Adrenal gland (tissue), 19 donors: ENCODE measurements at regions of chr19 and their contacts with region 1.

Region 1: DNA sequence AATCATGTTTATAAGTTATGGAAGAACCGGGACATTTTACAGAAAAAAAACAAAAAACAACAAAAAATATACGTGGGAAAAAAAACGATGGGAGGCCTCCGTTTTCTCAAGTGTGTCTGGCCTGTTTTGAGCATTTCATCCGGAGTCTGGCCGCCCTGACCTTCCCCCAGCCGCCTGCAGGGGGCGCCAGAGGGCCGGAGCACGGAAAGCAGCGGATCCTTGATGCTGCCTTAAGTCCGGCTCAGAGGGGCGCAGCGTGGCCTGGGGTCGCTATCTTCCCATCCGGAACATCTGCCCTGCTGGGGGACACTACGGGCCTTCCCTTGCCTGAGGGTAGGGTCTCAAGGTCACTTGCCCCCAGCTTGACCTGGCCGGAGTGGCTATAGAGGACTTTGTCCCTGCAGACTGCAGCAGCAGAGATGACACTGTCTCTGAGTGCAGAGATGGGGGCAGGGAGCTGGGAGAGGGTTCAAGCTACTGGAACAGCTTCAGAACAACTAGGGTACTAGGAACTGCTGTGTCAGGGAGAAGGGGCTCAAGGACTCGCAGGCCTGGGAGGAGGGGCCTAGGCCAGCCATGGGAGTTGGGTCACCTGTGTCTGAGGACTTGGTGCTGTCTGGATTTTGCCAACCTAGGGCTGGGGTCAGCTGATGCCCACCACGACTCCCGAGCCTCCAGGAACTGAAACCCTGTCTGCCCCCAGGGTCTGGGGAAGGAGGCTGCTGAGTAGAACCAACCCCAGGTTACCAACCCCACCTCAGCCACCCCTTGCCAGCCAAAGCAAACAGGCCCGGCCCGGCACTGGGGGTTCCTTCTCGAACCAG is 1.8 kb upstream of the APOE start:
- DNase-seq: peak; percentile 69 to 89 (median 80)
- H3K4me3 ChIP-seq: no peak overlapping the region
- H3K27ac ChIP-seq: peak overlapping the region; percentile 7 to 84 (median 82)
- H3K4me1 ChIP-seq: peaks cover 16 to 31% of the 10 kb centered on the region in 2 donors
- H3K27me3 ChIP-seq: no peaks in the 10 kb centered on the region
- CTCF ChIP-seq: peak; percentile 98 to 99 (median 98)
- POLR2A ChIP-seq: no peak

Region 2: GRCh38 chr19:44924243-44924725 is 20.5 kb after region 1 on chr19:
- intact Hi-C with region 1: no loop called
- DNase-seq: peak in 1 of 7 donors; percentile 37
- H3K4me3 ChIP-seq: no peak overlapping the region
- H3K27ac ChIP-seq: peak overlapping the region; percentile 40 to 85 (median 73)
- H3K4me1 ChIP-seq: peaks cover 40 to 41% of the 10 kb centered on the region in 2 donors
- H3K27me3 ChIP-seq: no peaks in the 10 kb centered on the region
- CTCF ChIP-seq: no peak
- POLR2A ChIP-seq: no peak

Region 3: GRCh38 chr19:44954824-44955586 is 51.2 kb after region 1 on chr19 and contains the start of gene CLPTM1:
- intact Hi-C with region 1: loop called (anchors 2 to 5 kb)
- DNase-seq: peak; percentile 97 to 98 (median 98)
- H3K4me3 ChIP-seq: peak within 1 kb of the TSS; percentile 75 to 96 (median 86)
- H3K27ac ChIP-seq: peak within 1 kb of the TSS; percentile 76 to 94 (median 86)
- H3K4me1 ChIP-seq: peaks cover 27 to 69% of the 10 kb centered on the region in 2 donors
- H3K27me3 ChIP-seq: no peaks in the 10 kb centered on the region
- CTCF ChIP-seq: peak in 3 of 6 experiments; percentile 27 to 33 (median 30)
- POLR2A ChIP-seq: peak; percentile 16 to 69
- total RNA-seq, gene CLPTM1: 67.8 to 293 (median 254) TPM

Region 4: DNA sequence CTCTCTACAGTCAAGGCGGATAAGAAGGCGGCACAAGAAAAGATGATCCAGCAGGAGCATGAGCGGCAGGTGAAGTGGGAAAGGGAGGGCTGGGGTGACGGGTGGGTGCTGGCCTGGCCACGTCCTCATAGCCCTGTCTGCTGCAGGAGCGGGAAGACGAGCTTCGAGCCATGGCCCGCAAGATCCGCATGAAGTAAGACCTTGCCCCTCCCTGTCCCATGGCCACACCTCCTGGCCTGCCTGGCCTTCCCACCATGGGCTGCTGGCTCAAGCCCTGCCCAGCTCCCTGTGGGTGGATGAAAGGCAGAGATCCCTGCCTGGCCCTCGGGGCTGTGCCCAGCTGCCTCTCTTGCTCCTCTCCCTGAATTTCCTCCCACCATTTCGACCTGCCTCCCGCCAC is 165.2 kb after region 1 on chr19:
- intact Hi-C with region 1: loop called (anchors 5 to 10 kb)
- DNase-seq: peak; percentile 52 to 84 (median 73)
- H3K4me3 ChIP-seq: no peak overlapping the region
- H3K27ac ChIP-seq: no peak overlapping the region
- H3K4me1 ChIP-seq: no peaks in the 10 kb centered on the region
- H3K27me3 ChIP-seq: no peaks in the 10 kb centered on the region
- CTCF ChIP-seq: no peak
- POLR2A ChIP-seq: no peak